Activated CD4-positive, alpha-beta memory T cell treated with anti-CD3 and anti-CD28 coated beads for 36 hours (primary cell): ENCODE measurements at regions of chr17 and their contacts with region 1.

Region 1: GRCh38 chr17:55601874-55602364 is 90.7 kb upstream of the SMIM36 start:
- DNase-seq: peak; percentile 18
- H3K4me3 Mint-ChIP-seq: no peak overlapping the region
- H3K27ac Mint-ChIP-seq: no peak overlapping the region
- H3K4me1 Mint-ChIP-seq: no peaks in the 10 kb centered on the region
- H3K27me3 Mint-ChIP-seq: peaks cover 12% of the 10 kb centered on the region

Region 2: GRCh38 chr17:55496094-55496881 is 105.6 kb before region 1 on chr17:
- CTCF ChIA-PET with region 1: no interaction called
- POLR2A ChIA-PET with region 1: no interaction called
- intact Hi-C with region 1: no loop called
- DNase-seq: no peak
- H3K4me3 Mint-ChIP-seq: no peak overlapping the region
- H3K27ac Mint-ChIP-seq: no peak overlapping the region
- H3K4me1 Mint-ChIP-seq: no peaks in the 10 kb centered on the region
- H3K27me3 Mint-ChIP-seq: peaks cover 4% of the 10 kb centered on the region

Region 3: DNA sequence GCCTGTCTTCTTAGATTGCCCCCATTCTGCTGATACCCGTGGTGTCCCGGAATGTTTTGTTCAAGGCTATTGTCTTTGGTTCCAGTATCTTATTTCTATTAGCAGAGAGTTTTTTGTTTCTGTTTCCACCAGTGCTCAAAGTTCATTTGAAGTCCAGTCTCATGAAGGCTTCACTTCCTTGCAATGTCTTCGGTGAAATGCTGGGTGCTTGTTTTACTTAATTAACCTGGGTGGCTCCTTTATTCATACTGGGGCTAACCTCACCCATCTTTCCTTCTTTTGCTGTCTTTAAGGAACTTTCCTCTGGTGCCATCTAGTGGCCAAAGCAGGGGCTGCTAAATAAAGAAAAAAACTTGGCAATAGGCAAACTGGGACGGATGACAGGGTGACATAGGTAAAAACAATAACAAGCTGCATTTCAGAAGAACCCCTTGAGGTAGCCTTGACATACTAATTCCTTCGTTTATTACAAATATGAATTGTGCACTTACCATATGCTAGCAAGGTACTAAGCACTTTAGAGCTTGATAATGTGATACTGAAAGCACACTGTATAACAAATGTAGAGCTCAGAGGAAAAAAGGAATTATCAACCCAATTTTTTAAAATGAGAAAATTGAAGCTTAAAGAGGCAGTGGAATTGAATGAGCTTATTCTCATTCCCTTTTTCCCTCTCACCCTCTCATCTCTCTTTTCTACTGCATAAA is 87.9 kb before region 1 on chr17:
- CTCF ChIA-PET with region 1: interaction called, 14 read pairs
- POLR2A ChIA-PET with region 1: interaction called, 3 read pairs
- intact Hi-C with region 1: no loop called
- DNase-seq: peak; percentile 75
- H3K4me3 Mint-ChIP-seq: no peak overlapping the region
- H3K27ac Mint-ChIP-seq: no peak overlapping the region
- H3K4me1 Mint-ChIP-seq: no peaks in the 10 kb centered on the region
- H3K27me3 Mint-ChIP-seq: peaks cover 6% of the 10 kb centered on the region

Region 4: DNA sequence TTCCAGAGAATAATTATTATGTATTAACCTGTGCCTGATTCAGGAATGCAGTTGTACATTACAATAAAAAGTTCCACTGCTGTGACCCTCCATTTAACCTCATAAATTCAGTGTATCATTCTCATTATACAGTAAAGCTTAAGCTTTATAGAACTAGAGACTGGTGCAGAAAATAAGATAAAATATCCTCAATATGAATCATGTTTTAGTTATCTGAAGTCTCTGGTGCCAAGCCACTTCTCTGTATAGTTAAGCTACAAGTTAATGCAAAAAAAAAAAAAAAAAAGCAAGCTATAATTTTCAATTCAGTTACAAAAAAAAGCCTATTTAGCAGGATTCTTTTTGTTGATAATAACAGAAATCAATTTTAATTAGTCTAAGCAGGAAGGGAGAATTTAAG is 68.3 kb before region 1 on chr17:
- CTCF ChIA-PET with region 1: interaction called, 229 read pairs
- POLR2A ChIA-PET with region 1: no interaction called
- intact Hi-C with region 1: no loop called
- DNase-seq: no peak
- H3K4me3 Mint-ChIP-seq: no peak overlapping the region
- H3K27ac Mint-ChIP-seq: no peak overlapping the region
- H3K4me1 Mint-ChIP-seq: no peaks in the 10 kb centered on the region
- H3K27me3 Mint-ChIP-seq: peaks cover 4% of the 10 kb centered on the region

Region 5: DNA sequence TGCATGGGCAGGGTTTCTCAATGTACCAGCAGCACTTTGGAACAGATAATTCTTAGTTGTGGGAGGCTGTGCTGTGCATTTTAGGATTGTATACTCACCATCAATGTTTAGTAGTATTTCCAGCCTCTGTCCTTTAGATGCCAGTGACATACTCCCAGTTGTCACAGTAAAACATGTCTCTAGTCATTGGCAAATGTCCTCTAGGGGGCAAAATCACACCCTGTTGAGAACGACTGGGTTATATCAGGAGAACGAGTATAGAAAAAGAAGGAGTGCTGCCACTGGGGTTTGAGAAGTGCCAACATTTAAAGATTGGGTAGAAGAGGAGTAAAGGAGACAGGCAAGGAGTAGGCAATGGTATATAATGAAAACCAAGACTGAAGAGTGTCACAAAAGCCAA is 52.8 kb before region 1 on chr17:
- CTCF ChIA-PET with region 1: interaction called, 28 read pairs
- POLR2A ChIA-PET with region 1: no interaction called
- intact Hi-C with region 1: no loop called
- DNase-seq: no peak
- H3K4me3 Mint-ChIP-seq: no peak overlapping the region
- H3K27ac Mint-ChIP-seq: no peak overlapping the region
- H3K4me1 Mint-ChIP-seq: peaks cover 24% of the 10 kb centered on the region
- H3K27me3 Mint-ChIP-seq: peaks cover 2% of the 10 kb centered on the region

Region 6: DNA sequence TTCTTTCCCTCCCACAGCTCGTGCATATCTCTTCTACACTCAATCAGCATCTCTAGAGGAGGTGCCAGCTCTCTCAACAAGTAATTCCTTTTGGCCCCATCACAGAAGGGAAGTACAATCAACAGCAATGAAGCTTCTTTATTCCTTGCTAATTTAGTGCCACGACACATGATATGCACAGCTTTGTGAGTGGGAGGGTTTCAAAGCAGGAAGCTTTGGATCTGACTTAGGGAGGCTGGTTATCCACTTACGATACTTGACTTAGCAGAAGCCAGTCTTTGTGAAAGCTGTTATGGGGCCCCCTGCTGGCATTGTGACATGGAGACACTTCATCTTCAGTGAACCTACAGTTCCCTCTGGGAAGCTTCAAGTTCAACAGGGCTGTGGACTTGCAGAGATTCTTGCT is 39.8 kb after region 1 on chr17:
- CTCF ChIA-PET with region 1: interaction called, 32 read pairs
- POLR2A ChIA-PET with region 1: no interaction called
- intact Hi-C with region 1: no loop called
- DNase-seq: peak; percentile 64
- H3K4me3 Mint-ChIP-seq: no peak overlapping the region
- H3K27ac Mint-ChIP-seq: no peak overlapping the region
- H3K4me1 Mint-ChIP-seq: no peaks in the 10 kb centered on the region
- H3K27me3 Mint-ChIP-seq: peaks cover 10% of the 10 kb centered on the region

Region 7: DNA sequence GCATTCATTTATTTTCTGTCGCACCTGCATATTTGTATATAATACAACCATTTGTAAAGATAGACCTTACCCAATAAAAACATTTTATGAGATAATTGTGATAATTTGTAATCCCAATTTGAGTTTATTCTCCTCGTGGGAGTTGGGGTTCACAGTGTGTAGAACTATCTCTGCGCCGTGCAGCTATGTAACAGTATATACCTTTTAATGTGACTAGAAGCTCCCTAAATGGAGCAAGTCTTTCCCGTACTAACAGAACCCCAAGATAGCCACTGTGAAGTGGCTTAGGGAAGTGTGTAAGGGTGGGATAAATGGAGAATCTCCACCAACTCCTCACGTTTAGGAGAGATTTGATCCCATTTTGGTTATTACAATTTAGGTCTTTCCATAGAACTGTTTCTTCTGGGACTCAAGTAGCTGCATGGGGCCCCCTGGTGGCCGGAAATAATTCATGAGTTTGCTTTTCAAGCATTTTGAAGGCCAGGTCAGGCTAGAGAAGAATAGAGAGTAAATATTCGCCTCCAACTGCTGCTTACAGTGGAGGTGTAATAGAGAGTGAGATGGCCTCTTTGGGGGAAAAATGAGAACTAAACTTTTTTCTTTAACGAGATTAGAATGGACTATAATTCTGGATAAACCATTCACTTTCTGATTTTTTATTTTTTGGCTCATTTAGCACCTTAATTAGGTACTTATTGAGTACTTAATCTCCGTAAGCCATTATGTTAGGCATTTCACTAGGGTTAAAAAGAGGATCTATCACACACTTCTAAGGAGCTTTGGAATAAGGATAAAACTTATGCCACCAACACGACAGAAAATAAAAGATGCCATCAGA is 116.2 kb after region 1 on chr17:
- CTCF ChIA-PET with region 1: interaction called, 17 read pairs
- POLR2A ChIA-PET with region 1: no interaction called
- intact Hi-C with region 1: no loop called
- DNase-seq: peak; percentile 74
- H3K4me3 Mint-ChIP-seq: no peak overlapping the region
- H3K27ac Mint-ChIP-seq: no peak overlapping the region
- H3K4me1 Mint-ChIP-seq: no peaks in the 10 kb centered on the region
- H3K27me3 Mint-ChIP-seq: peaks cover 25% of the 10 kb centered on the region

Region 8: DNA sequence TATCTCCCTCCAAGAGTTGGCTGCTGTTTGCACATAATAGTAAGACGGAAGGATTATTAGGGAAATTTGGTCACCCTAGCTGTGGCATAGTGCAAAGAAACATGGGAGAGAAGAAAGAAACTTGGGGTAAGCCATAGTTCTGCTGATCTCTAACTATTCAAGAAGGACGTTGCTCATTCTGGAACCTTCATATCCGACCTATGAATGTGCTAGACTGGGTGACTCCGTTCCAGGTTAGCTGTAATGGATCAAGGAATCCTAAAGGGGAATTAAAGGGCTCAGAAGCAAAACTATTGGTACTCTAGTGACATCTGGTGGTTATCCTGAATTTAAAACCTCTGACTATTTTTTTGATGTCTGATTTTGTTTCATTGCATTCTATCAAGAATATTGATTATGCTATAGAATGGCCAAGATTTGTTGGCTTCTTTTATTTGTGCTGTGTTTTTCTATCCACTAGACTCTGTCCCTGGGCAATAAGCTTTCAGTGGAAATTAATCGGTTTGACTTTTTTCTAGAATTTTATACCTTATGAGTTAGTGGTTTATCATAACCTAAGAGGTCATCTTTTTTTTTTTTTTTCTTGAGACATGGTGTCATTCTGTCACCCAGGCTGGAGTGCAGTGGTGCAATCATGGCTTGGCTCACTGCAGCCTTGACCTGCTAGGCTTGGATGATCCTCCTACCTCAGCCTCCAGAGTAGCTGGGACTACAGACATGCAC is 168.4 kb after region 1 on chr17:
- CTCF ChIA-PET with region 1: interaction called, 25 read pairs
- POLR2A ChIA-PET with region 1: no interaction called
- intact Hi-C with region 1: loop called (anchors 10 kb)
- DNase-seq: no peak
- H3K4me3 Mint-ChIP-seq: no peak overlapping the region
- H3K27ac Mint-ChIP-seq: no peak overlapping the region
- H3K4me1 Mint-ChIP-seq: no peaks in the 10 kb centered on the region
- H3K27me3 Mint-ChIP-seq: no peaks in the 10 kb centered on the region

Region 9: DNA sequence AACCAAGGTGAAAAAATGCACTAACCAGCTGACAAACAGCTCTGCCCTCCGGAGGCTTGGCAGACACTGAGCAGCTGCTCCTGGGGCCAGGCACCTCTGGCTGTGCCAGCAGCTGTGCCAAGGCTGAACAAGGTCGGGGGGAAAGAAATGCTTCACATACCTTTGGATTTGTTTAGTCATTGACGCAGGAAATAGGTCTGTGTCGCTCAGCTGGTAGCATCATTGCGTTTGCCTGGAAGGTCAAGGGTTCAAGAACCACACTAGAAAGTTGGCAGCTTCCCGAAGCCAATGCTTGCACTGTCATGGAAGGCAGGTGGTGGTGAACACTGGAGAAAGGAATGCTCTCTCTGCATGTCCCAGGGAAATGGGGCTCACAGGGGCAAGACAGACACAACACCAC is 212.5 kb after region 1 on chr17:
- CTCF ChIA-PET with region 1: no interaction called
- POLR2A ChIA-PET with region 1: no interaction called
- intact Hi-C with region 1: no loop called
- DNase-seq: no peak
- H3K4me3 Mint-ChIP-seq: no peak overlapping the region
- H3K27ac Mint-ChIP-seq: no peak overlapping the region
- H3K4me1 Mint-ChIP-seq: no peaks in the 10 kb centered on the region
- H3K27me3 Mint-ChIP-seq: peaks cover 17% of the 10 kb centered on the region